Cardiac septum (tissue), 1 donor: ENCODE measurements at regions of chr3 and their contacts with region 1.

Region 1: GRCh38 chr3:71031914-71032521 is 551.5 kb downstream of the FOXP1 start:
- DNase-seq: no peak

Region 2: GRCh38 chr3:71051893-71052687 is 20.1 kb after region 1 on chr3:
- intact Hi-C with region 1: loop called (anchors 2 kb)
- DNase-seq: no peak